ENCODE measurements at regions of chr1 and their contacts with region 1.

Region 1: GRCh38 chr1:87435484-87435883 is 106.8 kb downstream of the LMO4 start:
- DNase-seq: peak; percentile 42
- H3K4me3 Mint-ChIP-seq: peak overlapping the region; percentile 39
- H3K27ac Mint-ChIP-seq: peak overlapping the region; percentile 75
- H3K4me1 Mint-ChIP-seq: peaks cover 41% of the 10 kb centered on the region
- H3K27me3 Mint-ChIP-seq: no peaks in the 10 kb centered on the region
- CTCF ChIP-seq: no peak

Region 2: DNA sequence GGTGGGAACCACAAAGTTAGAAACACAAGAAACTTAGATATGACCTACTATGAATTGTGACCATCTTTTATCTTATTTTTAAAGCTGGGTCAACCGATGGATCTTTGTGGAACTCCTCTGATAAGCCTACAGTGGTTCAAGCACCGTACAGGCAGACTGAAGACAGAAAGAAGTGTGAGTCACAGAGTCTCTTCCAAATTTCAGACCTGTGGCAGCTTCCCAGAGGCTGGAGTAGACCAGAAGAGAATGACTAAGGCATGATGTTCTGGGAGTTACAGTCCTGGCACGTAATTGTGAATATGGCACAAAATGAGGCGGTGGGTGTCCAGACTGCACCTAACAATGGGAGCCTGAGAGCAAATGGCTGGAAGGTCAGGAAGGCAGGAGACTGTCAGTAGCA is 36.8 kb before region 1 on chr1:
- CTCF ChIA-PET with region 1: no interaction called
- intact Hi-C with region 1: loop called (anchors 5 kb)
- DNase-seq: no peak
- H3K4me3 Mint-ChIP-seq: peak overlapping the region; percentile 5
- H3K27ac Mint-ChIP-seq: peak overlapping the region; percentile 75
- H3K4me1 Mint-ChIP-seq: peaks cover 27% of the 10 kb centered on the region
- H3K27me3 Mint-ChIP-seq: no peaks in the 10 kb centered on the region
- CTCF ChIP-seq: no peak

Region 3: GRCh38 chr1:87588495-87588894 is 153.0 kb after region 1 on chr1:
- CTCF ChIA-PET with region 1: no interaction called
- intact Hi-C with region 1: no loop called
- DNase-seq: no peak
- H3K4me3 Mint-ChIP-seq: no peak overlapping the region
- H3K27ac Mint-ChIP-seq: no peak overlapping the region
- H3K4me1 Mint-ChIP-seq: peaks cover 38% of the 10 kb centered on the region
- H3K27me3 Mint-ChIP-seq: no peaks in the 10 kb centered on the region
- CTCF ChIP-seq: no peak

Measured in Calu3 (cell line).